ENCODE measurements at regions of chr11 and their contacts with region 1.

Region 1: DNA sequence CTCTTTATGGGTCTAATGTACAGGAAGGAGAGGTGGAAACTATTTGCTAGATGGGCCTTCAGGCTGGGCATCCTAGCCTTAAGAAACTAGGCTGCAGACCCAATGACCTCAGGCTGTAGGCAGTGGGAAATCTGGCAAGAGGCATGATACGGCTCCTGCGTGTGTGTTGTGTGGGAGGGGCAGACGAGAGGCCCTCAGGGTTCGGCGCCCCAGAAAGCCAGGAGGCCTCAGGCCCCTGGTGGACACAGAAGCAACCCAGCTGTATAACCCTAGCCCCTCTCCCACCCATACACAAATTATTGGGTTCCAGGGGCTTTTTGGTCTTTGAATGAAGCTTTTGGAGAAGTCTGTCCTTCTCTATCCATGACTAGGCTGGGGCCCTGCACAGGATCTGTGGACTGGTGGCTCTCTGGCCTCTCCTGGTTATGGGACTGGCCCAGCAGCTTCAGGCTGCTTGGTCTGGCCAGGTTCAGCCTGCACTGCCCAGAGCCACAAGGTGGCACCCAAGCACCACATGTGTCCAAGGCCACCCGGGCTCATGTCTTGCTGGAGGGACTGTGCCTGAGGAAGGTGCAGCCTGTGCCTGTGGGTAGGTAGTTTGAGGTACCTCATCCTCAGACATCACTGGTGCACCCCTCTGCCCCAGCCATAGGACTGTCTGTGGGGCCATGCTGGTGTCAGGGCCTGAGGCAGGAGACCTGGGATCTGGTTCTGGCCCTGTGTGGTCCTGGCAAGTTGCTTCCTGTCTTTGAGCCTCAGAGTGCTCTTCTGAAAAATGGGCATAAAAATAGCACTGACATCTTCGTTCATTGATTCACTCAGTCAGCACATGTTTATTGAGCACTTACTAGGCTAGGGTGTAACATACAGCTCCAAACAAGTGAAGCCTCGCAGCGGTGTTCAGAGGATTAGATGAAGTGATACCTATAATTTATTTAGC is 87.5 kb downstream of the RRM1 start:
- DNase-seq: no peak
- H3K4me3 ChIP-seq: no peak overlapping the region
- H3K27ac ChIP-seq: no peak overlapping the region
- H3K4me1 ChIP-seq: peaks cover 0 to 5% (median 0%) of the 10 kb centered on the region in 3 donors
- H3K27me3 ChIP-seq: no peaks in the 10 kb centered on the region
- CTCF ChIP-seq: peak in 5 of 6 experiments; percentile 37 to 70 (median 43)
- POLR2A ChIP-seq: no peak

Region 2: GRCh38 chr11:3709977-3710376 is 472.1 kb before region 1 on chr11:
- intact Hi-C with region 1: no loop called
- DNase-seq: no peak
- H3K4me3 ChIP-seq: no peak overlapping the region
- H3K27ac ChIP-seq: no peak overlapping the region
- H3K4me1 ChIP-seq: no peaks in the 10 kb centered on the region
- H3K27me3 ChIP-seq: no peaks in the 10 kb centered on the region
- CTCF ChIP-seq: no peak
- POLR2A ChIP-seq: no peak

Region 3: GRCh38 chr11:4496557-4497275 is 314.7 kb after region 1 on chr11:
- intact Hi-C with region 1: loop called (anchors 5 kb)
- DNase-seq: no peak
- H3K4me3 ChIP-seq: no peak overlapping the region
- H3K27ac ChIP-seq: no peak overlapping the region
- H3K4me1 ChIP-seq: peaks cover 0 to 24% (median 0%) of the 10 kb centered on the region in 3 donors
- H3K27me3 ChIP-seq: peaks cover 0 to 17% (median 0%) of the 10 kb centered on the region in 4 donors
- CTCF ChIP-seq: no peak
- POLR2A ChIP-seq: no peak

Measured in esophagus squamous epithelium (tissue), 5 donors.